ENCODE measurements at regions of chr2 and their contacts with region 1.

Region 1: GRCh38 chr2:182509-183122 is 81.2 kb downstream of the SH3YL1 start:
- DNase-seq: no peak
- H3K4me3 ChIP-seq: no peak overlapping the region
- H3K27ac ChIP-seq: no peak overlapping the region
- H3K4me1 ChIP-seq: peaks cover 5% of the 10 kb centered on the region
- H3K27me3 ChIP-seq: no peaks in the 10 kb centered on the region
- CTCF ChIP-seq: no peak

Region 2: DNA sequence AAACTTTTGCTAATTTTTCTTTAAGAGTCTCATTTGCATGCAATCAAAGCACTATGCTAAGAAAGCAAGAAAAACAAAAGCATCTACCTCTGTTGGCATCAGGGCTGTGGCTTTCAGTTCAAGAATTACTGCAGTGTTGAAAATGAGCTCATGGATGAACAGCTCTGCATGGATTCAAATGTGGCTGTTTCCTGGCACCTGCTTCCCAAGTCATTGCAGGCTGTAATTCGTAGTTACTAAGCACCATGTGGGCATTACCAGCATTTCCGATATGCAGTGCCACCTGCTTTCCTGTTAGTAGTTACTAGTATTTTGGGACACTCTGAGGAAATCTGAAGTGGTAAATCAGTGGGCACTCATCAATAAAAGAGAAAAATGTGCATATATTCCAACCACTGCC is 98.5 kb before region 1 on chr2:
- CTCF ChIA-PET with region 1: no interaction called
- POLR2A ChIA-PET with region 1: interaction called, 13 read pairs
- intact Hi-C with region 1: no loop called
- DNase-seq: no peak
- H3K4me3 ChIP-seq: no peak overlapping the region
- H3K27ac ChIP-seq: no peak overlapping the region
- H3K4me1 ChIP-seq: no peaks in the 10 kb centered on the region
- H3K27me3 ChIP-seq: no peaks in the 10 kb centered on the region
- CTCF ChIP-seq: no peak

Measured in PC-9 (cell line).